Cardiac septum (tissue), 1 donor: ENCODE measurements at regions of chr12 and their contacts with region 1.

Region 1: DNA sequence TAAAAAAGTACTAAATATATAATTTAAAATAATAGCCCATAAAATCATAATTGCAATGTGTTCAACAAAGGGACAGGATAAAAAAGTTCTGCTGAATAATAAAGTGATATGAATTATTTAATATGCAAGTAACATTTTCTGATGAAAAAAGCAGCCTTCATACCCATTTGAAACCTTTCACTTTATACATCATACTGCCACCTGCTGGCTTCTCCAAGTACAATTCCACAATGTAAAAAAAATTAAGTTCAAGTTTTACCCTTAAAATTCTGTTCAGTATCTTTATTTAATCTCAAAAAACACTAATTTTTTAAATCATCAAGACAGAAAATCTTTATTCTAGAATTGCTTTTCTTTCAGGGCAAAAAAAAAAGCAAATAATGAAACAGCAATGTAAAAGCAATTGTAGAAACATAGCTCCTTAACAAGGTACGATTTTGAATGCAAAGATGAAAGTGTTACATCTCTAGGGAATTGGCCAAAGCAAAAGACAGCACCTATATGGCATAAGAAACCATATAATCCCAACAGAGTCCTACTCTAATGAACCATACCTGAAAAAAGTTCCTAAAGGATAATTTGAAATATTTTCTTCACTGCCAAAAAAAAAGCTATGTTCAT is 15.0 kb downstream of the MDM1 start:
- DNase-seq: no peak

Region 2: DNA sequence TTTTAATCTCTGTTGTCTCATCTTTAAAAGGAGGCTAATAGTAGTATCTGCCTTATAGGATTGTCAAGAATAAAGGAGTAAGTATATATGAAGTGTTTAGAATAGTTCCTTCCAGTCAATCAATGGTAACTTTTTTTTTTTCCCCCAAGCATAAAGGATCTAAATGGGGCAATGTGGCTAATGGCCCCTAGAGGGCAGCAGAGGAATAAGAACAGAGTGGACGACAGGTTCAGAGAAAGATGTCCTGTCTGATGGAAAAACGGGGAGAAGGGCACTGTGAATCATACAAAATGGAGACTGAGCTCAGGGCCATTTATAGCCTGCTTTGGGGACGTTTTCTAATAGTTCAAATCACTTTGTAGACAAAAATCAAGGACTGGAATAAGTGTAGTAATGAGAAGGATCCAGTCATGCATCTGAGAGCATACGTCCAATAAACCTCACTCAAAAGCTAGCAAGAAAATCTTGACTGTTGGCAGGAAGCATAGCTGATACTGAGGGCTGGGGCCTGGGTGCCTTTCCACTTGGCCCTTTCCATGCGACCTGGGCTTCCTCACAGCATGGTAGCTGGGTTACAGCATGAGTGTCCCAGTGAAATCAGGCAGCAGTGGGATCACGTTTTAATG is 276.6 kb before region 1 on chr12:
- intact Hi-C with region 1: loop called (anchors 10 kb)
- DNase-seq: no peak

Region 3: GRCh38 chr12:68223083-68223747 is 93.9 kb before region 1 on chr12:
- intact Hi-C with region 1: loop called (anchors 1 kb)
- DNase-seq: peak; percentile 82